ENCODE measurements at regions of chr2 and their contacts with region 1.

Region 1: DNA sequence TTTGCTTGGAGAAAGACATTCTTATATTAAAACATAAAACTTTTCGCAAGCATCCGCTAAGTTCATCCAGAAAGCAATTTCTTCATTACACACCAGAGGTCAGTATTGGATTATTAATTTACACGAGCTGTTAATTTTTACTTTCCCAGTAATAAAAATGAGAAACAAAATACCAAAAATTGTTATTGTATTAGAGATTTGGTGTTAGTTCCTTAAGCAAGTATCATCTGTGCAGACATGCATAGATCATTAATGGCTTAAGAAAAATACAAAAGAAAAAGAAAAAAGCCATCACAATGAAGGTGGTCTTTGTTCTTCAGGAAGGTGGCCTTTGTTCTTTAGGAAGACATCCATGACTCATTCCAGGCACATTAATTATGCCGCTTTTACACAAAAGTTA is 53.6 kb upstream of the HNMT start:
- DNase-seq: no peak
- ATAC-seq: no peak
- H3K4me3 ChIP-seq: no peak overlapping the region
- H3K4me1 ChIP-seq: no peaks in the 10 kb centered on the region
- CTCF ChIP-seq: peak; percentile 31

Region 2: DNA sequence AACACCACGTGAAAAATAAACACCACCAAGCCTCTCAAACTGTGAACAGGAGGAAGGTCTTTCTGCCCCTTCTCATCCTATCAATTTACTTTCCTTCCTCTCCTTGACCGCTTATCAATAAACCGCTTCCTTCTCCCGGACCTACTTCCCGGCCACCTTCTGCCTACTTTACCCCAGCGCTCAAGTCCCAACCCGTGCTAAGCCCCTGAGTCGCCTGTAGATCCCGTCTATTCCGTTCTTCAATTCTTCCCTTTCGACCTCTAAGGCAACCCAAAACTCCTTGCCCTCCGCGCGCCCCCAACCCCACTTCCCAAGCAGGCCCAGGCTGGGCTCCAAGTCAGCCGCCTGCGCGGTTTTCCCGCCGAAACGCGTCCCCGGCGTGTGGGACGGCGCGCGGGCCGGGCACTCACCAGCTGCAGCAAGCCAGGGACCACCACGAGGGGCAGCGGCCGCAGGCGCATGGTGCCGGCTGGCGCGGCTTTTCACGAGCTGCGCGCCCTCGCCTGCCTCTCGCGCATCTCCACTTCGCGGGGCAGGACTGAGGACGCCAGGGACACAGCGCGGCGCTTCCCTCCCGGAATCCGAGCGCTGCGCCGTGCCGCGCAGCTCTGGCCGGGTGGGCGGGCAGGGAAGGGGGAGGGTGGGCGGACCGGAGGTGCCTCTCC is 869.3 kb after region 1 on chr2 and contains the start of gene NXPH2:
- intact Hi-C with region 1: loop called in 1 of 2 experiments (anchors 5 kb)
- DNase-seq: no peak
- ATAC-seq: no peak
- H3K4me3 ChIP-seq: no peak within 1 kb of the TSS
- H3K4me1 ChIP-seq: peaks cover 7% of the 10 kb centered on the region
- CTCF ChIP-seq: no peak
- total RNA-seq, gene NXPH2: 0.38 TPM in 1 of 3 donors, not detected in the others